Left cardiac atrium (tissue), 4 donors: ENCODE measurements at regions of chr1 and their contacts with region 1.

Region 1: GRCh38 chr1:74468982-74469603 is 43.3 kb downstream of the LRRC53 start:
- DNase-seq: no peak
- ATAC-seq: peak; percentile 45 to 46

Region 2: DNA sequence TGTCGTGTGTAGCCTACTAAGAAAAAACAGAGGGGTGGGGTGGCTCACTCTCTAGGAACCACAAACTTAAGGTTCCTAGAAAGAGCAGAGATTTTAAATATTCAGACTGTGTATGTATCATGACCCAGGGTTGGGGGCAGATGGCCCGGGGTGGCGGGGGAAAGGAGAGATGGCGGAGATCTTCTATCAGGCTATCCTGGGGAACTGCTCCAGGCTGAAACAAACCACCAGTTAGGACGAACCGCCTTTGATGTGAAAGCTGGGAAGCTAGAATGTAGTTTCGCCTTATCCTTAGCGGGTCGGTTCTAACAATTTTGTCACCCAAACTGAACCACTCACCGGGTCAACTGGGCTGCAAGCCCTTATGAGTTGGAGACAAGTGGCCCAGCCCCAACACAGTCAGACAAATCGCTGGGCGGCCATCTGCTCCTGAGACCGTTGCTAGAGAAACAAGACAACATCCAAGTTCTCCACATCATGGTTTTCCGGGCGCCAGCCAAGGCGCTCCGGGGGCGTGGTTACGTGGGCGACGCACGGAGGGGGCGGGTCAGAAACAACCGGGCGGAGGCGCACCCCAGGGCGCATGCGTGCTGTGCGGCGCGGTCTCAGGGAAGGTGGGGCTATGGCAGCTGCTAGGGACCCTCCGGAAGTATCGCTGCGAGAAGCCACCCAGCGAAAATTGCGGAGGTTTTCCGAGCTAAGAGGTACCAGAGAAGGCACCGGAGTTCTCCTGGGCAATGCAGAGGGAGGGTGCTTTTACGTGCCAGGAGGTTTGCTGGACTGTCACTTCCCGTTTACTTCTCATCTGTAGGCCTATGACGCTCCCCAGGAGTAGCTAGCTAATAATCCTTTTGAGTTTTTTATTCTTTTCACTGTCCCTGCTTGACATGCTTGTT is 271.2 kb before region 1 on chr1 and contains the starts of genes FPGT and LRRIQ3:
- intact Hi-C with region 1: loop called in 1 of 2 experiments (anchors 10 kb)
- DNase-seq: peak; percentile 95
- ATAC-seq: peak; percentile 100
- total RNA-seq, gene FPGT: 11.7 to 12.5 TPM
- total RNA-seq, gene LRRIQ3: 0.18 to 0.29 TPM

Region 3: GRCh38 chr1:74412244-74412643 is 56.8 kb before region 1 on chr1:
- intact Hi-C with region 1: no loop called
- DNase-seq: no peak
- ATAC-seq: no peak